ENCODE measurements at regions of chr5 and their contacts with region 1.

Region 1: DNA sequence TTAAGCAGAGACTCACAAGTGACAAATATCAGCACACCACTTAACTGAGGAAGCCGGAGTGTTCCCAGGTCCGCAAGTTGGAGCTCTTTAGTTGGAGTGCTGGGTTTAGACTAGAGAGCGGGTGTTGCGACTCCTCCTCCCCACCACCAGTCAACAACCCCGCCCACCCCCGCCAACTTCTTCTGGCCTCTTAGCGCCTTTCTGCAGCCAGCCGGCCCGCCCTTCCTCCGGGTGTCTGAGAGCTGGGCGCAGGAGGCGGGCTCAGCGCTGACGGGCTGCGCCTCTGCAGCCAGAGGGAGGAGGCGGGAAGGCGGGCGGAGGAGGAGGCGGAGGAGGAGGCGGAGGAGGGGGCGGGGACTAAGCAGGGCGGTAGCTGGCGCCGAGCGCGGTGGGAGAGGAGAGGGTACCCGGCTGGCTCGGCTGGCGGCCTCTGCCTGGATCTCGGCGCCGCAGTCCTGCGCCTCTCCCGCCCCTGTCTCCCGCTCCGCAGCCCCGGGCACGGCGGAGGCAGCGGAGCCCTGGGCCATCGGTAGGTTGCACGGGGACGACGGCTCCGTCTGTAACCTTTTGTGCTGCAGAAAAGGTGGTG is at the start of gene MACIR:
- DNase-seq: peak; percentile 80 to 97 (median 94)

Region 2: DNA sequence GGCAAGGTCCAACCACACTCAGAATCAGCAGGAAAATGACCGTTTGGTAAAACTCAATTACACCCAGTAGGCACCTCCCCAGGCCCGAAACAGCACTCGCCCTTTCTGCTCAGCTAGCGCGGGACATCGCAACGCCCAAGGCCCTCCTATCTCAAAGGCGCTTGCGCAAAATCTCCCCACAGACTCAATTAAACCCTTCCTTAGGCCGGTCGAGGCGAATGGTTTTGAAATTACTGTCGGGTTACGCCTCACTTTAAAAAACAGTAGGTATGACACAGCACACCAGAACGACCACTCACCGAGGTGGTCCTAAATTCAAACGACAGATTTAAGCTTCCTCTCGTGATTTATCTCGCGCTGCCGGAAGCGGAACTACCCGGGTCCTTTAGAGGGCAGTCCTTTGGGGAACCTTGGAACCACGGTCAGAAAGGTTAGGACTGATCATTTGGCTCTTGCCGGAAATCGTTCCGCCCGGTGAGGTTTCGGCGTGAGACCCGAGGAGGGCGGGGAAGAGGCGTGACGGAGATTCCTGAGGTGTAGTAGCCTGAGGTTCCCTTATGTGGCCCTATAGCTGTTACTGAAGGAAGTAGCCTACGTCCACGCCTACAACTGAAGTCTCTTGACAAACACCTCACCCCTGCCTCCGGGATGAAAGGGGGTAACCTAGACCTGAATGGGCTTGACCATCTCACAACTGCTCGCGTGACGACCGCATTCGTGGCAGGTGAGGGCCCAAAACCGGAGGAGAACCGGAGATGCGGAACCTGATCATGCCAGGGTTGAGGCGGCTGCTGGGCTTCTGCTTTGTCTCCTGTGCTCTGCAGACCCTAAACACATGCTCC is 138.5 kb before region 1 on chr5 and contains the starts of genes GIN1 and PPIP5K2:
- intact Hi-C with region 1: loop called (anchors 10 kb)
- DNase-seq: peak; percentile 92 to 98 (median 97)

Region 3: GRCh38 chr5:103290846-103291245 is 32.4 kb after region 1 on chr5:
- intact Hi-C with region 1: loop called (anchors 5 kb)
- DNase-seq: peak in 6 of 42 donors; percentile 34 to 69 (median 48)

Region 4: DNA sequence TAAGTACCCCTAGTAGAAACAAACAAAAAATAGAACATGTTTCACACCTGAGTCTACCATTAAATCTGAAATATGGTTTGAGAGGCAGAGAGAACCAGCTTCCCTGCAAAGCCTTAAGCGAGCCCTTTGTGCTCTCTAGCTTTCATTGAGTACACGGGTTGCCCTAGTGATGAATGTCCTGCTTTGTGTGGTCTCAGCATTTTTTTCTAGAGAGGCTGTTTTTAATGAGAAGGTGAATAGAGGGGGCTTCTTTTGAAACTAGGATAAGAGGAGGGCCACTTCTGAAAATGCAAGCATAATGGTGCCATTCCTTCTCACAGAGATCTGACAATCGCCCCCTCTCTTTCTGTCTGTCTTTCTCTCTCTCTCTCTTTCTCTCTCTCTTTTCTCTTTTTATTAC is 131.4 kb after region 1 on chr5:
- intact Hi-C with region 1: loop called (anchors 2 kb)
- DNase-seq: peak in 2 of 42 donors; percentile 23 to 28

Region 5: DNA sequence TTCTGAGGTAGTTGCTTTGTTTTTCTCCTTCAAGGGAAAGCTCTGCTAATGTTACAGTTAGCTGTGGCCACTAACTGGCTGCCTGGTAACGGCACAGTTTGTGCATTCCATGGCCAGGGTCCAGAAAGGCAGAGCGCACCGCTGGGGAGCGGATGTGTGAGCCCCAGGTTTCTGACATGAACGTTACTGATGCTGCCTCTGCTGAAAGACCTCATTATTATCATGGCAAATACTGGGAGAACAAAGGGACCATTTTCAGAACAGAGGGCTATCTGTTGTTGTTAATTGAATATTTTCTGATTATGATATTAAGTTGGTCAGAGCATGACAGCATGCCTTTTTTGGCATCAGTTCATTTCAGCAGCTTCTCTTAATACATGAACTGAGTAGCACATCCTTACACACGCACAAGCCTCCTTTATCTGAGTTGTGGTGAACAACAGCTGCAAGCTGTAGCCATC is 170.0 kb after region 1 on chr5:
- intact Hi-C with region 1: no loop called
- DNase-seq: peak in 32 of 42 donors; percentile 2 to 64 (median 20)

Measured in head of caudate nucleus (tissue), 42 donors.